Posterior vena cava (tissue), 2 donors: ENCODE measurements at regions of chr10 and their contacts with region 1.

Region 1: GRCh38 chr10:124741281-124741921 is 2.8 kb downstream of the FAM53B start:
- DNase-seq: peak; percentile 94

Region 2: DNA sequence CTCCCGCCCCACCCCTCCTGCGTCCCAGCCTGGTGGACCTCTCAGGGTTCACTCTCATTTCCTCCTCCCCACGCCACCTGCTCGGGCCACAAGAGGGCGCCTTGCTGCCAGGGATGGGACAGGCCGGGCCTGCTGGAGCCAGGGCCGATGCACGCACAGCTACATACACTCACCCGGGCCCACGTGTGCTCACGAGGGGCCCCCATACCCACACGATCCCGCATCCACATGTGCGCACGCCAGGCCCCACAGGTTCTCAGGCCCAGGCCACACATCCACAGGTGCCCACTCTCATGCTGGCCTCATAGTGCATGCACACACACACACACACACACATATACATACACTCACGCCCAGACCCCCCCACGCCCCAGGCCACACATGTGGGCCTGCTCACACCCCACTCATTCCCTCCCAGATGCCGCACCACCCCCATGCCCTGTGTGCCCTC is 211.2 kb before region 1 on chr10:
- intact Hi-C with region 1: loop called in 1 of 2 experiments (anchors 5 kb)
- DNase-seq: peak; percentile 95

Region 3: GRCh38 chr10:124632064-124632531 is 109.3 kb before region 1 on chr10:
- intact Hi-C with region 1: loop called in 1 of 2 experiments (anchors 5 kb)
- DNase-seq: no peak

Region 4: GRCh38 chr10:124701435-124701834 is 40.0 kb before region 1 on chr10:
- intact Hi-C with region 1: loop called in 1 of 2 experiments (anchors 5 kb)
- DNase-seq: peak; percentile 97

Region 5: DNA sequence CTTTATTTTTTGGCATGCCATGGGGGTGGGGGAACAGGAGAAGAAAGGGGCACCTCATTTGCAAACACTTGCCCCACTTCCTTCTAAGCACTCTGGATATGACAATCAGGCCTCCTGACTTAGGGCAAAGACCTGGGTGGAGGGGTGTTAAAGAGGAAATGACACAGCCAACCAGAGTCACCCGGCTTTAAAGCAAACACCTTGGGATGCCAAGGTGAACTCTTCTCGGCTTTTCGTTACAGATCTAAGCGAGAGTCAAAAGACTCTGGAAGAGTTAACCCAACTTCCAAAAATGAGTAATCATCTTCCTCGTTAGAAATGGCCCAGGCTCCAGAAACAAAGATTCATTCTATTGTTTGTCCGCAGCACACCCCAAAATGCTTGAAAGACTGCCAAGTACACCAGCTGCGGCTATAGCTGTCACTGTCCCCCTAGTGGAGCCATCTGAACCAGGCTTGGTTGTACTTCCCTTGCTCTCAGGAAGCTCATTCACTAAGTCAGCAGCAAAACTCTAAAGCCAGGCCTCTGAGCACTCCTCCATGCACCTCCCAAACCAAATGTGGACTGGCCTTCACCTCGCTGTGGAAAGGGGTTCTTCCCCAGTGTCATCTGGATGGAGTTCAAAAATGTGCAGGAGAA is 22.1 kb before region 1 on chr10:
- intact Hi-C with region 1: no loop called
- DNase-seq: no peak

Region 6: DNA sequence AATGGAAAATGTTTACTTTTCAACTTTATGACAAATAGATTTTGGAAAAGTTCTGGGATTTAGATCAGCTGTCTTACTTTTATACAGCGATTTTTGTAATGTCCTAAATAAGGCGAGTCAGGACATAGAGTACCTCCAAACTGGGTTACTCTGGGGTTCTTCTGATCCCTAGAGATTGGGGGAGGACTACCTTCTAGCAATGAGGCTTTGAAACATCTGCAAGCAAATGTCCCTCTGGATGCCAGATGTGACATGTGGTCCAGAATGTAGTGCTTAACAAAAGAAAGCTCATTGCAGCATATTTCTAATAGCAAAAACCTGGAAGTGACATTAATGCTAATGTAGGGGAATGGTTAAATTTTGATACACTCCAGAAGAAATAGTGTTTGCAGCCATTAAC is 96.3 kb after region 1 on chr10:
- intact Hi-C with region 1: no loop called
- DNase-seq: no peak